BJ (cell line): ENCODE measurements at regions of chr6 and their contacts with region 1.

Region 1: GRCh38 chr6:53492860-53493634 is 51.9 kb downstream of the GCLC start:
- DNase-seq: no peak
- H3K4me3 ChIP-seq: no peak overlapping the region; the same call in 1 of the 2 replicates
- H3K27me3 ChIP-seq: no peaks in the 10 kb centered on the region
- CTCF ChIP-seq: peak; percentile 69

Region 2: GRCh38 chr6:53171605-53172446 is 321.2 kb before region 1 on chr6:
- CTCF ChIA-PET with region 1: interaction called, 10 read pairs
- POLR2A ChIA-PET with region 1: no interaction called
- DNase-seq: no peak
- H3K4me3 ChIP-seq: no peak overlapping the region
- H3K27me3 ChIP-seq: no peaks in the 10 kb centered on the region
- CTCF ChIP-seq: peak; percentile 100

Region 3: DNA sequence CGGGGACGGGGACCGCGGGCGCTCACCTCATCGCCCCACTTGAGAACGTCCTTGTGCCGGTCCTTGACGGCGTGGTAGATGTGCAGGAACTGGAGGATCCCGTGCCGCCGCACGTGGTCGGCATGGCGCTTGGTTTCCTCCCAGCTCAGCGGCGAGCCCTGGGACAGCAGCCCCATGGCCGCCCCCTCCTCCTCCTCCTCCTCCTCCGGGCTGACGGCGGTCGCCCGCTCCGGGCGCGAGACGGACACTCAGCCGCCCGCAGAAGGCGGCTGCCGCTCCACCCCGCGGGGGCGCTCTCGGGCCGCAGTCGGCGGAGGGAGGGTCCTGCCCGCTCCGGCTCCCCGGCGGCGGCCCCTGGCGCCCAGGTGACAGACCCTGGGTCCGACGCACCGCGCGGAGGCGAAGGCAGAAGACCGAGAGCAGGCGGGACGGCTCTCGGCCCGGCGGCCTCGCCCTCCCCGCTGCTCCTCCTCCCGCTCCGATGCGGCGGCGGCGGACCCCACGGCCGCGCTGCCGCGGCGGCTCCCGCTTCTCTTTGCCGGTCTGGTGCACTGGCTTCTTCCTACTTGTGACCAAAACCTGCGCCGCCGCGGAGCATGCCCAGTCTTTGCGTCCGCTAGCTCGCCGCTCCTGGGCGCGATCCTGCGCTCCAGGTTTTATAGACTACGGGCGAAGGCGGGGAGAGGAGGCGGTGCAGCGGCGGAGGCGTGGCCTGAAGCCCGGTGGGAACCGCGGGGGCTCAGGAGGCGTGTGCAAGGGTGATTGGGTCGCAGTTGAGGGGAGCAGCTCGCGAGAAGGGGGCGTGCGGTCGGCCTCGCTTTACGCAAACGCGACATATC is 51.6 kb after region 1 on chr6 and contains the start of gene GCLC:
- CTCF ChIA-PET with region 1: interaction called, 28 read pairs
- POLR2A ChIA-PET with region 1: no interaction called
- DNase-seq: peak; percentile 52
- H3K4me3 ChIP-seq: peak within 1 kb of the TSS; percentile 89
- H3K27me3 ChIP-seq: no peaks in the 10 kb centered on the region
- CTCF ChIP-seq: peak; percentile 35
- polyA plus RNA-seq, gene GCLC: 8.4 and 15.0 TPM in 2 replicates

Region 4: GRCh38 chr6:53651764-53652401 is 158.8 kb after region 1 on chr6:
- CTCF ChIA-PET with region 1: interaction called, 109 read pairs
- POLR2A ChIA-PET with region 1: no interaction called
- DNase-seq: no peak
- H3K4me3 ChIP-seq: peak overlapping the region; percentile 62
- H3K27me3 ChIP-seq: peaks cover 14% of the 10 kb centered on the region
- CTCF ChIP-seq: peak; percentile 31; the same call in 1 of the 2 replicates

Region 5: DNA sequence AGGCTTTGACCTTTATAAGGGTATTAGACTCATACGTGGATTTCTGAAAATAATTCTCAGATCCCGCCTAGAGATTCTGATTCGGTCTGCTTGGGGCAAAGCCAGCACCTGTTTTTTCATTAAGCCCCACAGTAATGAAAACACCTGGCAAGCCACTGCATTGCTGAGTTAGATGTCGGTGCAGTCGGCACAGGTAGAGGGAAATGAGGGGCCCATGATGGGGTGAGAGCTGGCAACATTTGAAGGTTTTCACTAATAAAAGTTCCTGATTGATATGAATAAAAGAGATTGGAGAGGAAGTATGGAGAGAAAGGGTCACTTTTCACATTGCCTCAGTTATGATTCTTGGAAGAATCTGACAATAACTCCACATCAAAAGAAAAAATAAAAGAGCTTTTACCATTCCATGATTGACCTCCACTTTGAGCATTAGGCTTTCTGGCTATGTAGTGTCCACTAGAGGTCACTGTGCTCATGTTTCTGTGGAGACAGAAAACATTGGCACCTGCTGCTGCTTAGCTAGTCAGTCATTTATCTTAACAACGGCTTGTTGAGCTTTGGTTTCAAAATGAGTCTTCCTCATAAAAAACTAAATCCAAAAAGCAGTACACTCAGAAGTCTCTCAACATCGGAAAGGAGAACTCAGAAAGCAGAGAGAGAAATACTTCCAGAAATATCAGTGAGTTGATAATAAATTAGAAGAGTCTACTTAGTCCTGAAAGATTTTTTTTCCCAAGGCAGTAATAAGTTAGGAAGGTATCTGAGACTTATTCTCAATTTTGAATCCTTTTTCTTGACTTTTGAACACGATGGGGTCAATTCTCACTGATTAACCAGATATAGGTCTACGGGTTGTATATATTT is 225.8 kb after region 1 on chr6:
- CTCF ChIA-PET with region 1: interaction called, 56 read pairs
- POLR2A ChIA-PET with region 1: no interaction called
- DNase-seq: no peak
- H3K4me3 ChIP-seq: no peak overlapping the region
- H3K27me3 ChIP-seq: peaks cover 14% of the 10 kb centered on the region
- CTCF ChIP-seq: peak; percentile 86

Region 6: GRCh38 chr6:53725791-53726431 is 232.9 kb after region 1 on chr6:
- CTCF ChIA-PET with region 1: interaction called, 56 read pairs
- POLR2A ChIA-PET with region 1: no interaction called
- DNase-seq: no peak
- H3K4me3 ChIP-seq: no peak overlapping the region
- H3K27me3 ChIP-seq: no peaks in the 10 kb centered on the region; the same call in 1 of the 2 replicates
- CTCF ChIP-seq: peak; percentile 99

Region 7: DNA sequence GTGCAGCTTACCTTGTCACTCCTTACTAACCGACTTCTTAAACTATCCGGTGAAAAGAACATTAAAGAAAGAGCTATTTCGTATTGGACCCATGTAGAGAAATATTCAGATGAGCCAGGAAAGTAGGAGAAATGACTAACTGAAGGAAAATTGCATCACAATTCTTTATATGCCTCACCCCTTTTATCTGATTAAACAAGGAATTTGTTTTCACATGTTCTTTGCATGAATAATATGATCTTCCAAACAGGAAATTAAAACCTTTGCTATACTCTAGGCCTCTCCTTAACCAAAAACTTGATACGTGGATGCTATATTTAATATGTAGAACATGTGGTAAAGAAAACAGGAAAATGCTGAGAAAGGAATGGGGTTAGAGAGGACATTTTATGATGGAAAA is 259.8 kb after region 1 on chr6:
- CTCF ChIA-PET with region 1: no interaction called
- POLR2A ChIA-PET with region 1: no interaction called
- DNase-seq: peak; percentile 61
- H3K4me3 ChIP-seq: no peak overlapping the region
- H3K27me3 ChIP-seq: no peaks in the 10 kb centered on the region
- CTCF ChIP-seq: no peak